PC-3 (cell line): ENCODE measurements at regions of chr1 and their contacts with region 1.

Region 1: DNA sequence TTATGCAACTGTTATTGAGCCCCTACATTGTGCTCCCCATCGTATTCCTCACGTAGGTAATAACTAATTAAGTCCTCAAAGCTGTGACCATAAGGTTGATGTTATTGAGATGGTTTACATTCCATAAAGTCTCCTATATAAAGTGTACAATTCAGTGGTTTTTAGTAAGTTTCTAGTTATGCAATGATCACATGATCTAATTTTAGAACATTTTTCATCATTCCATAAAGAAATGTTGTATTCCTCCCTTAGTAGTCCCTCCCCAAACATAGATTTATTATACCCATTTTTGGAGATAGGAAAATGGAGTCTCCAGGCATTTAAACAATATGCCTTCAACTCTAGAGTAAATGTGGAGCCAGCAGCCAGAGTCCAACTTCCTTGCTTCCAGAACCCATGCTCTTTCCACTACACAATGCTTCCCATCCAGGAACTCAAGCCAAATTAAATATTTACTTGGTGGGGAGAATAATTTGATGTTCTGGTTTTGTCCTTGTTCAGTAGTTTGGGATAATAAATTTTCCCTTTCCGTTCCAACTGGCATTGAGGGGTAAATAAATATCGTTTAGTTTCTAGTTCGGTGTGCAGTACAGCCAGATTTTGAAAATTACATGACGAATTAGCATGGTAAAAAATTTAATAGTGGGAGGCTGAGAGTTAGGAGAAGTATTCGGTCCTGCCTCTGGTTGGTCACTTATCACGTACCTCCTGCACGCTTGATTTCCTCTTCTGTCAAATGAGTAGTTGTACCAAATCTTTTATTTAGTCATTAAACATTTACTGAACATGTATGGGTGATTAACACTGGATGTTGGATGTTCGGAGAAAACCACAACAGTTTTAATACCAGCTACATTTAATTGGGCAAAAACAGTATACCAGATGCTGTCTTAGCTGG is 66.3 kb downstream of the CACHD1 start:
- DNase-seq: peak; percentile 65
- ATAC-seq: peak; percentile 84
- H3K4me3 ChIP-seq: peak overlapping the region; percentile 16; the same call in 1 of the 2 replicates
- H3K27ac ChIP-seq: peak overlapping the region; percentile 4; the same call in 1 of the 2 replicates
- H3K4me1 ChIP-seq: peaks cover 21% of the 10 kb centered on the region
- H3K27me3 ChIP-seq: no peaks in the 10 kb centered on the region
- CTCF ChIP-seq: no peak

Region 2: DNA sequence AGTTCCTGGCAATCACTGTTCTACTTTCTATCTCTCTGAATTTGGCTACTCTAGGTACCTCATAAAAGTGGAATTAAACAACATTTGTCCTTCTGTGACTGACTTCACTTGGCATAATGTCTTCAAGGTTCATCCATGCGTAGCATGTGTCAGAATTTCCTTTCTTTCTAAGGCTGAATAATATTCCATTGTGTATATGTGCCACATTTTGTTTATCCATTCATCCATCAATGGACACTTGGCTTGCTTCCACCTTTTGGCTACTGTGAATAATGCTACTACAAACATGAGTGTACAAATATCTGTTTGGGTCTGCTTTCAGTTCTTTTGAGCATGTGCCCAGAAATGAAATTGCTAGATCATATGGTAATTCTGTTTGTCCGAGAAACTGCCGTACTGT is 51.5 kb before region 1 on chr1:
- CTCF ChIA-PET with region 1: no interaction called
- POLR2A ChIA-PET with region 1: no interaction called
- intact Hi-C with region 1: loop called (anchors 1 kb)
- DNase-seq: peak; percentile 96
- ATAC-seq: peak; percentile 87
- H3K4me3 ChIP-seq: peak overlapping the region; percentile 29; the same call in 1 of the 2 replicates
- H3K27ac ChIP-seq: peak overlapping the region; percentile 43
- H3K4me1 ChIP-seq: peaks cover 15% of the 10 kb centered on the region
- H3K27me3 ChIP-seq: no peaks in the 10 kb centered on the region
- CTCF ChIP-seq: no peak